ENCODE measurements at regions of chr6 and their contacts with region 1.

Region 1: DNA sequence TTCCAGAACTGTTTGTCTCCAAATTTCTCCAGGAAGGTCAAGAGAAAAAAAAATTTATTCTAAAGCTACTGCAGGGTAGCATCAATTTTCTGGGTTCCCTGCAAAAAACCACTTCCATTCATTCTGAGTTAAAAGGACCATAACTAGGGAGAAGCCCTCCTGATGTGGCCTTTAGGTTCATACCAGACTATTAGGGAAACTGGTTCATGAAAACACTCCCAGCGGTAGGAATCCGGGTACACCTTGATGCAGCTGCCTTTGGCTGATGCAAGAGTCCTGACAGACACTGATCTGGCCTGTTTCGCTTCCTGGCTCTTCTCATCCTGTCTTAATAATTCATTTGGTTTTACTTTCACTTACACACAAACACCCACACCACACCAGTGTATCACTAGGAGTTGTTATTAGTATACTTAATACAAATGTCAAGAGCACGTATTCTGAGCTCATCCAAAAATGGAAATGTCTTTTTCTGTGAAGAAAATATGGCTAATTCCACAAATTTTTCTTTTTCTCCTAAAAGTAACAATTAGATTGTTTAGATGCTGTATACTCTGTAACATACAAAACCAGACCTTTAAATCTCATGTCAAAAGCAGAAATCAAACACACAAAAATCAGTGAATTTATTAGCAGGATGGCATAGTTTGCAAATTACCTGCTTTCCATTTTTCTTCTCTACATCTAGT is 38.4 kb upstream of the ARHGAP18 start:
- DNase-seq: peak; percentile 93
- H3K4me3 Mint-ChIP-seq: peak overlapping the region; percentile 47
- H3K27ac Mint-ChIP-seq: peak overlapping the region; percentile 87
- H3K4me1 Mint-ChIP-seq: peaks cover 36% of the 10 kb centered on the region
- H3K27me3 Mint-ChIP-seq: no peaks in the 10 kb centered on the region
- CTCF ChIP-seq: peak; percentile 28

Region 2: GRCh38 chr6:129490521-129491245 is 257.7 kb before region 1 on chr6:
- CTCF ChIA-PET with region 1: no interaction called
- POLR2A ChIA-PET with region 1: interaction called, 3 read pairs
- intact Hi-C with region 1: loop called (anchors 2 kb)
- DNase-seq: peak; percentile 97
- H3K4me3 Mint-ChIP-seq: peak overlapping the region; percentile 75
- H3K27ac Mint-ChIP-seq: peak overlapping the region; percentile 99
- H3K4me1 Mint-ChIP-seq: peaks cover 30% of the 10 kb centered on the region
- H3K27me3 Mint-ChIP-seq: no peaks in the 10 kb centered on the region
- CTCF ChIP-seq: no peak

Region 3: DNA sequence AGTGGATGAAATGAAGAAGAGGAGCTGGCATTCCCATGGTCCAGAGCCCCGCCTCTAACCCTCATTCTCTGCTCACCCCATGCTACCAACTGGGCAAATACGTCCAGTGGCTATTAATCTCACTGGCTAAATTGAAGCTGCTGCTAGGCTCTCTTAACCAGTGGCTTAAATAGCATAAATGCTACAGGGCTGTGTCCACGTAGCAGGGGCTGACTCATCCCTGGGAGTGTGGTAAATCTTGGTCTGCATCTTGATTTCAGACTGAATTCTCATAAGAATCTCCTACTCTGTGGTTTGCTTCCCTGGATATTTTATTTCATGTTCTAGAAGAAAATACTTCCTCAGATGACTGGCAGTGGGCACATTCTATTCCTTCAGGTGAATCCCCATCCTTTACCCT is 1631.6 kb after region 1 on chr6:
- CTCF ChIA-PET with region 1: no interaction called
- POLR2A ChIA-PET with region 1: no interaction called
- intact Hi-C with region 1: no loop called
- DNase-seq: peak; percentile 45
- H3K4me3 Mint-ChIP-seq: no peak overlapping the region
- H3K27ac Mint-ChIP-seq: no peak overlapping the region
- H3K4me1 Mint-ChIP-seq: peaks cover 18% of the 10 kb centered on the region
- H3K27me3 Mint-ChIP-seq: no peaks in the 10 kb centered on the region
- CTCF ChIP-seq: no peak

Measured in MCF 10A (cell line).